ENCODE measurements at regions of chr3 and their contacts with region 1.

Region 1: DNA sequence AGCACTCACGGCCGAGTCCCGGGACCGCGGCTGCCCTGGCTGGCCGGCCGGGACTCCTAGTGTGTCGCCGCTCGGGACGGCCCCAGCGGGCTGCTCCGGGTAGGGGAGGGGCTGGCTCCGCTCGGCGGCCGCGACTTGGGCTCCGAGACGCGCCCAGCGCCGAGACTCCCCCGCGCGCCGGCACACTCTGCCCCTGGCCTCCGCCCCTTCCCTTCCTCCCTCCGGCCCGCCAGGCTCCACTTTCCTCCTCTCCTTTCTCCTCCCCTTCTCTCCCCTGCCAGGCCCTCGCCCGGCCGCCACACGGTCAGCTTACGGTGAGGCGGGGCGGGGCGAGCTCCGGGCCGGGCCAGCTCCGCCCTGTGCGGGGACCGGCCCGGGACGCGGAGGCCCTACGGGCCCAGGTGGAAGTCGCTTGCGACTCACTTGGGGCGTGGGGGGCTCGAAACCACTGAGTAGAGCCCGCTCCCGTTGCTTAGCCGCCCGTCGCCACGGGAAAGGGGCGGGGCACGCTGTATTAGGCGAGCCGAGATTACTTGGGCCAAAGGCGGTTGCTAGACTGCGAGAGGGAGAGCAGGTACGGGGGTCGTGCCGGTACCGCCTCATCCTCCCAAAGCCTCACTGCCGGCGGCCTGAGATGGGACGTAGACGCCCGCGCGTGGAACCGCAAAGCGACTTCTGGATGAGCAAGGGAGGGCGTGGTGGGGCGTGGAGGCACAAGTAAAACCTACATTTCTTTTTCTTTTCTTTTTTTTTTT is at the start of gene ITGB5:
- DNase-seq: peak; percentile 86
- ATAC-seq: peak; percentile 94
- total RNA-seq, gene ITGB5: 109 TPM

Region 2: DNA sequence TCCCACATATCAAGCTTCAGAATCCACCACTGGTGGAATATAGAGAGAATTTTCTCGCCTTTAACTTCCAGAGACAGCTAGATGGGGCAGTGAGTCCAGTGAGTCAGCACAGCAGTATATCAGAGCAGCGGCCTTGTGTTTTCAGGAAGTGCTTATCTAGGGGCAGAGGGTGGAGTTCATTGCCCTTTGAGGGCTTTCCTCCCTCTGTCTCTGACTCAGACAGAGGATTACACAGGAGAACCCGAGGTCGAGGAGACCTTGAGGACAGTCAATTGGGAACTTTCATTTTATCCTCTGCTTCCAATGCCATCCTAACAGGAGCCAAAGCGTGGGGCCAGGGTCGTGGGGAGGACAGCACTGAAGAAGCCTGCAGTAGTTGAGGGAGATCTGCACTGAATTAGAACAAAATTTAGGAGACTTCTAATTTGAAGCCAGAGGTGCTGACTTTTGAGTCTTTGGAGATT is 266.7 kb before region 1 on chr3:
- intact Hi-C with region 1: no loop called
- DNase-seq: peak; percentile 42
- ATAC-seq: peak; percentile 62

Region 3: DNA sequence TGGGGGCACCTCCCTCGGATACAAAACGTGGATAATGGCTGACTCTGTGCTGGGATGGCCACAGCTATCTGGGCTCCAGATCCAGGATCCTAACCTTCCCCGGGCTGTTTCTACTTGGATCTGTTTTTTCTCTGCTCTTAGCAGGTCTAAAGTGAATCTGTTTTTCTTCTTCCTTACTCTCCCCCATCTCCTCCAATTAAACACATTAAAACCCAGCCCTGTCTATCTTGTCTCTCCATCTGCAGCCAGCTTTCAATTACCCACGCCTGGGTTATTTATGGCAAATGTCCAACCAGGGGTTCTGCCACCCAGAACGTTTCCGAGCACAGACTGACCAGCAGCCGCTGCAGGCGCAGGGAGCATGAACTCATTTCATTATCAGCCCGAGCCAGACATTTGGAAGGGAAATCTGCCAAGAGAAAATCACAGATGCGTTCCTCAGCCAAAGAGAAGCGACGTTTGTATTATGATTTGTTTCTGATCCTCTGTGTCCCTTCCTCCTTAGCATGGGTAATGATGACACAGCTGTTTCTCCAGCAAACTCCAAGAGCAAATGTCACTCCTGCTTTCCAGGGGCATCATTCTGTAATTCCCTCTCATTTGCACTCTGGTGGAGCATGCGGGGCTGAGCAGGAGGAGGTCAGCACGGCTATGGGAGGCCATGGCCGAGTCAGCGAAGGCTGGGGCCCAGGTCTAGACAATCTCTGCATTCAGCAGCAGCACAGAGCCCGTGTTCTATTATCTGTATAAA is 115.1 kb before region 1 on chr3:
- intact Hi-C with region 1: loop called (anchors 2 kb)
- DNase-seq: no peak
- ATAC-seq: peak; percentile 44

Region 4: DNA sequence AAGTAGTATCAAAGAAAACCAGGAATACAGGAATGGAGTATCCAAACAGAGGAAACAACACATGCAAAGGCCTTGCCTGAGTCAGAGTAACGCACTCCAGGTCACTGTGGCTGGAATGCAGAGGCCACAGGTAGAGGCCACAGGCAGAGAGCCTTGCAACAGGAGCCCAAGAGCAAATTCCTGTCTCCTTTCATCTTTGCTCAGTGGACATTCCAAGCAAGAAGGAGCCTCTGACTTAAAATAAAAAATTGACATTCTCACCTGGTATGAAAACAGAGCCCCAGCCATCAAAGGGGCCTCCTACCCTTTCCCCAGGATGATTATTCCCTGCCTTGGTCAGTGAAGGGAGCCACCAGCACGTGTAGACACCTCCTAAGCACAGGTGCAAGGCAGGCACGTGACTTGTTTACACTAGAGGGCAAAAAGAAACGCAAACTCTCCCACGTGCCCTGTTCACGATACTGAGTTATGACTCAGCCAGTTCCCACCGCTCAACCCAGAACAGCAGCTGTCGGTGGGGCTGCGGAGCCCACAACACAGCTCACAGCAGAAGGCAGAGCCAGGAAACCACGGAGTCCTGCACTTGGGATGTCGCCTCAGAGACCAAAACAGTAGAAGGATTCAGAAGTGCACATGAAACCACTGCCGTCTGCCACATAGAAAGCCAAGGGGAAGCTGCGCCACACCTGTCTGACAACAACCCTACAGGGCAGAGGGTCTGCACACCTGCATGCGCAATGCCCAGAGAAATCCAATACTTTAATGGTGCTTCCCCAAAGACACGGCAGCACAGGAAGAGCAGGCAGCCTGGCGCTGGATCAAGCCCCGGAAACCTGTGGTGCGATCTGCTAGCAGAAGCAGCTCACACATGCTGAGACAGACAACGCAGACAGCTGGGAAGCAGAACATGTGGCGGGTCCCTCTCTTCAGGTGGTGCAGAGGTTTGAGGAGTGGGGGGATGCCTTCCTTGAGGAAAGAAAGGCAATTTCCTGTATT is 52.3 kb before region 1 on chr3:
- intact Hi-C with region 1: loop called (anchors 5 kb)
- DNase-seq: no peak
- ATAC-seq: peak; percentile 30

Region 5: GRCh38 chr3:124845406-124845805 is 41.9 kb before region 1 on chr3:
- intact Hi-C with region 1: loop called (anchors 5 kb)
- DNase-seq: no peak
- ATAC-seq: peak; percentile 89

Region 6: DNA sequence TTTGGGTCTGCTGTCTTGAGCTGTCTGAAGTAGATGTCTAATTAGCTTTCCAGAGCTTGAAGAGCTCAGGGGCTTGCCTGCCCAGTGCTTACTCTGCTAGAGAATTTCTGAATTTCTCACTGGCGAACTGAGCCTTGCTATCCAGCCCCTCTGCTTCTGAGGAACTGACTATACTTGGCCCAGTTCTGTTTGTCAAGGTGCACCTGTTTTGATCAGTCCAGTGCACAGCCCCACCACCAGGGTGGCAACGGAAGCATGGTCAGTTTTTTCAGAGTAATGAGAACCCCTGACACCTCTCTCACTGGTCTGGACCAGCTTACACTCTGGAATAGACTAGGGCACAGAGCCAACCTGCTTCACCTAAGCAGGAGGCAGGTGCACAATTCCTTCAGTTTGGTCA is 25.3 kb before region 1 on chr3:
- intact Hi-C with region 1: loop called (anchors 2 kb)
- DNase-seq: no peak
- ATAC-seq: no peak